Right lobe of liver (tissue), 6 donors: ENCODE measurements at regions of chr11 and their contacts with region 1.

Region 1: DNA sequence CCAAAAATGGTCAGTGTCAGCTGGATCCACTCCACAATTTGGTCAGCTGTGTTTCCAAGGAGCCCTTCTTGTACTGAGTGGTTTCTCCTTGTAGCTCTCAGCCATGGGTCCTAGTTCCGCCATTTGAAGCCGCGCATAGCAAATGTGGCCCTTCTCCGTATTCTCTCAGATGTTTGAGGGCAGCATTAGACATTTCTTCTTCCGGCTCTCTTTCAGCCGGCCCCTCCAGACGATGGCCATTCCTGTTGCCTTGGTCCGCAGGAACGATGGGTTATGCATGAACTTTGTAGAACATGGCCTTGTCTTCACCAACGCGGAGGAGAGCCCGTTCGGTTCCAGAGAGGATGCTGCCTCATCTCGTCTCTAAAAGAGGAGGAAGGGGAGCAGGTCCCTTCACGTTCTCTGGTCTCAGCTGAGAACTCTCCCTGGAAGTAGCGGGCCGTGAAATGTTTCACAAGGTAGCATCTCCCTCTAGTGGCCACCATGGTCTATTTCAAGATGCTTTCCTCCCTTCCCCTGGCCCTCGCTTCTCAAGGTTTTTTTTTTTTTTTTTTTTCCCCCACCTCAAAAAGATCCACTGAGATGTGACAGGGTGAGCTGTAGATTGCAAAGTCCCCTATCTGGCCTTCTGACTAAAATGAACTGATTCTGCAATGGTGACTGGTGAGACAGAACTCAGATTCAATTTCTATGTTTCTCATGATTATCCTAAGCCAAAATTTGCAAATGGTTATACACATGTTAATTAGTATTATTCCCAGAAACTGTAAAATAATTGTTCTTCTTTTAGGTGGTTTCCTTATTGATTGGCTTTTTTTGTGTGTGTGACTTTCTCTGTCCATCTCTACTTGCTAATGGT is 19.8 kb upstream of the PLET1 start:
- DNase-seq: peak; percentile 37 to 70 (median 58)
- ATAC-seq: peak; percentile 94 to 96 (median 96)
- H3K4me3 ChIP-seq: peak overlapping the region; percentile 49 to 58 (median 50)
- H3K27ac ChIP-seq: peak overlapping the region in 2 of 3 donors; percentile 34 to 42
- H3K4me1 ChIP-seq: peaks cover 0 to 3% (median 0%) of the 10 kb centered on the region in 4 donors
- H3K27me3 ChIP-seq: no peaks in the 10 kb centered on the region
- CTCF ChIP-seq: peak; percentile 60 to 65 (median 64)
- POLR2A ChIP-seq: no peak

Region 2: DNA sequence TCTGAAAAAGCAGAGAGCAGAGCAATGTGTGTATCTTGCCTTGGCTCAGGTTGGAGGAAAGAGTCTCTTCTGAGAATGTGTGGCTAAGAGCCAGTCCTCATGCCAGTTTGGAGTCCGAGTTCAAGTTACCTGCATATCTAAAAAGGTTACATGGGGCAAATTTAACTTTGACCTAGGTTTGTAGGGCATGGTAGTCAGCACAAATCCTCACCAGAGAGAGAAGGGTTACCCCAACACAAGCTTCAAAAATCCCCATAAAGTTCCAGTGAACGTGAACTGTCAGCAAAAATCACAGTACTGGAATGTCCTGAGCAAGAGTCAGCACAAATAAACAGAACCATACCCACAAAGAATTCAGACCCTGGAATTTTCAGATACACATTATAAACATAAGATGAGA is 180.0 kb before region 1 on chr11:
- intact Hi-C with region 1: loop called in 1 of 2 experiments (anchors 10 kb)
- DNase-seq: peak in 1 of 3 donors; percentile 55
- ATAC-seq: peak; percentile 52 to 90 (median 72)
- H3K4me3 ChIP-seq: no peak overlapping the region
- H3K27ac ChIP-seq: peak overlapping the region in 1 of 3 donors; percentile 54
- H3K4me1 ChIP-seq: peaks cover 0 to 13% (median 0%) of the 10 kb centered on the region in 4 donors
- H3K27me3 ChIP-seq: no peaks in the 10 kb centered on the region
- CTCF ChIP-seq: no peak
- POLR2A ChIP-seq: no peak

Region 3: GRCh38 chr11:112219476-112220232 is 60.8 kb before region 1 on chr11:
- intact Hi-C with region 1: loop called (anchors 2 to 5 kb)
- DNase-seq: no peak
- ATAC-seq: peak; percentile 72 to 84 (median 75)
- H3K4me3 ChIP-seq: no peak overlapping the region
- H3K27ac ChIP-seq: peak overlapping the region in 2 of 3 donors; percentile 82 to 96
- H3K4me1 ChIP-seq: peaks cover 0 to 78% (median 36%) of the 10 kb centered on the region in 4 donors
- H3K27me3 ChIP-seq: no peaks in the 10 kb centered on the region
- CTCF ChIP-seq: peak; percentile 64 to 96 (median 77)
- POLR2A ChIP-seq: no peak

Region 4: DNA sequence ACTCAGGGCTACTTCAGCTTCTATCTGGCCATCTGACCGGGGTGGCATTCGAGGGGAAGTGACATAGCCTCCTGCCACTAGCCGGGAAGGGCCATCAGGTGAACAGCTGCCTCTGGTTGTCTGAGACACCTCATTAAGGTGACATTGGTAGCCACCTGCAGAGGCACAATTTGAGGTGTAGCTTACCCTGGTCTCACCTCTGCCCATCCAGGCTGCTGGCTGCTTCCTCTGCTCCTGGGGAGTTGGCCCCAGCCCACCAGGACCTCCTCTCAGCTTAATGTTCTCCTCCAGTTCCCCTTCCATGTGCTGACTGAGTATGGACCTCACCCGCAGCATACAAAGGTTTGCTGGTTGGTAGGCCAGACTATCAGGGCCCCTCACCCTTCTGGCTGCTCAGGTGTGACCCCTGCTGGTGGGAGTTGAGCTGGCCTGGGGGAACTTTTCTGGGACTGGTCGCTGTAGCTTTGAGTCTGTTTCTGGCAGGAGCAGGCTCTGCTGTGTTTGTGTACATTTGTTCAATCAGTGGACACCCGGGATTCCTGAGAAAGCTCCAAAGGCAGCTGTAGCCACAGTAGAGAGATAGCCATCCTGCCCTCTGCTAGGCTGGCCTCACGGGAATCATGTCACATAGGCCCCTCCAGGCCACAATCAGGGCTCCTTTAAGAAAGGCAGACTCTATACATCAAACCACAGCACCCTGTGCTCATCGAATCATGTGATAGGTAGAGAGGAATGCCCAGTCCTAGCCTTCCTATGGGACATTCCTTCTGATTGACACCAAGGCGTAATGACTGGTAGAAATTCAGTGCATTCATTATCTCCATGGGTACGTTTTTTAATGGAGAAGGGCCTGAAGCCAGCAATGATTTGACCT is 275.2 kb after region 1 on chr11:
- intact Hi-C with region 1: loop called in 1 of 2 experiments (anchors 10 kb)
- DNase-seq: peak; percentile 60 to 71 (median 63)
- ATAC-seq: peak; percentile 85 to 94 (median 88)
- H3K4me3 ChIP-seq: no peak overlapping the region
- H3K27ac ChIP-seq: no peak overlapping the region
- H3K4me1 ChIP-seq: no peaks in the 10 kb centered on the region
- H3K27me3 ChIP-seq: no peaks in the 10 kb centered on the region
- CTCF ChIP-seq: peak; percentile 62 to 76 (median 67)
- POLR2A ChIP-seq: no peak